ENCODE measurements at regions of chr4 and their contacts with region 1.

Region 1: GRCh38 chr4:164058776-164059445 is 564.4 kb downstream of the TMA16 start:
- DNase-seq: no peak
- ATAC-seq: no peak
- H3K4me3 ChIP-seq: no peak overlapping the region
- H3K4me3 Mint-ChIP-seq: no peak overlapping the region
- H3K27ac ChIP-seq: no peak overlapping the region
- H3K27ac Mint-ChIP-seq: no peak overlapping the region
- H3K4me1 ChIP-seq: no peaks in the 10 kb centered on the region
- H3K4me1 Mint-ChIP-seq: no peaks in the 10 kb centered on the region
- H3K27me3 ChIP-seq: no peaks in the 10 kb centered on the region
- H3K27me3 Mint-ChIP-seq: no peaks in the 10 kb centered on the region
- CTCF ChIP-seq: no peak

Region 2: GRCh38 chr4:163269869-163270268 is 789.0 kb before region 1 on chr4:
- CTCF ChIA-PET with region 1: no interaction called
- POLR2A ChIA-PET with region 1: no interaction called
- intact Hi-C with region 1: loop called in 1 of 2 experiments (anchors 5 kb)
- DNase-seq: no peak
- ATAC-seq: no peak
- H3K4me3 ChIP-seq: no peak overlapping the region
- H3K4me3 Mint-ChIP-seq: no peak overlapping the region
- H3K27ac ChIP-seq: no peak overlapping the region
- H3K27ac Mint-ChIP-seq: no peak overlapping the region
- H3K4me1 ChIP-seq: no peaks in the 10 kb centered on the region
- H3K4me1 Mint-ChIP-seq: no peaks in the 10 kb centered on the region
- H3K27me3 ChIP-seq: no peaks in the 10 kb centered on the region
- H3K27me3 Mint-ChIP-seq: peaks cover 7% of the 10 kb centered on the region
- CTCF ChIP-seq: no peak

Region 3: DNA sequence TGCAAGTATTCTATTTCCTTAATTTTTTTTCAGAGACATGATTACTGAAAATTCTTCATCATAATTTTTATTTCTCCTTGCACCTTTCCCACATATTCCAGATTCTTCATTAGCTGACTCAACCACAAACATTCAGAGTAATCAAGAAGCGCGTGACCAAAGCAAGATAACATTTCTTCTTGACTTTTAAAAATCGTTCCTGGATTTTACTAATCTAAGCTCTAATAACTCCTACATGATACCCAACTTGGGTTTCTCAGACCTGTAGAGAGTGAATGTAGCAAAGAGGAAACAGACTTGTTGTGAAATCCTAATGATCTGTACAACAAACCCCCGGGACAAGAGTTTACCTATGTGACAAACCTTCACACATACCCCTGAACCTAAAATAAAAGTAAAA is 50.6 kb after region 1 on chr4:
- CTCF ChIA-PET with region 1: no interaction called
- POLR2A ChIA-PET with region 1: no interaction called
- intact Hi-C with region 1: no loop called
- DNase-seq: no peak
- ATAC-seq: no peak
- H3K4me3 ChIP-seq: no peak overlapping the region
- H3K4me3 Mint-ChIP-seq: no peak overlapping the region
- H3K27ac ChIP-seq: no peak overlapping the region
- H3K27ac Mint-ChIP-seq: no peak overlapping the region
- H3K4me1 ChIP-seq: no peaks in the 10 kb centered on the region
- H3K4me1 Mint-ChIP-seq: no peaks in the 10 kb centered on the region
- H3K27me3 ChIP-seq: no peaks in the 10 kb centered on the region
- H3K27me3 Mint-ChIP-seq: no peaks in the 10 kb centered on the region
- CTCF ChIP-seq: no peak

Measured in CD4-positive, alpha-beta T cell (primary cell).